HepG2 (cell line): ENCODE measurements at regions of chr9 and their contacts with region 1.

Region 1: GRCh38 chr9:36190388-36191287 is at the start of gene CLTA:
- DNase-seq: peak; percentile 99
- ATAC-seq: peak; percentile 98
- H3K4me3 ChIP-seq: peak within 1 kb of the TSS; percentile 84 to 86 (median 85)
- H3K27ac ChIP-seq: peak within 1 kb of the TSS; percentile 76
- H3K4me1 ChIP-seq: peaks cover 36% of the 10 kb centered on the region
- H3K27me3 ChIP-seq: no peaks in the 10 kb centered on the region; a peak in 1 of 5 replicates
- CTCF ChIP-seq: peak; percentile 51
- EP300 ChIP-seq: 0 out of 4 replicates have a peak, but pooled peaks of 1 of the 2 experiments have one; percentile 8
- POLR2A ChIP-seq: peak; percentile 95 to 98
- RAD21 ChIP-seq: peak; percentile 33; the same call in 1 of the 2 replicates
- total RNA-seq, gene CLTA: 222 and 227 TPM in 2 replicates

Region 2: DNA sequence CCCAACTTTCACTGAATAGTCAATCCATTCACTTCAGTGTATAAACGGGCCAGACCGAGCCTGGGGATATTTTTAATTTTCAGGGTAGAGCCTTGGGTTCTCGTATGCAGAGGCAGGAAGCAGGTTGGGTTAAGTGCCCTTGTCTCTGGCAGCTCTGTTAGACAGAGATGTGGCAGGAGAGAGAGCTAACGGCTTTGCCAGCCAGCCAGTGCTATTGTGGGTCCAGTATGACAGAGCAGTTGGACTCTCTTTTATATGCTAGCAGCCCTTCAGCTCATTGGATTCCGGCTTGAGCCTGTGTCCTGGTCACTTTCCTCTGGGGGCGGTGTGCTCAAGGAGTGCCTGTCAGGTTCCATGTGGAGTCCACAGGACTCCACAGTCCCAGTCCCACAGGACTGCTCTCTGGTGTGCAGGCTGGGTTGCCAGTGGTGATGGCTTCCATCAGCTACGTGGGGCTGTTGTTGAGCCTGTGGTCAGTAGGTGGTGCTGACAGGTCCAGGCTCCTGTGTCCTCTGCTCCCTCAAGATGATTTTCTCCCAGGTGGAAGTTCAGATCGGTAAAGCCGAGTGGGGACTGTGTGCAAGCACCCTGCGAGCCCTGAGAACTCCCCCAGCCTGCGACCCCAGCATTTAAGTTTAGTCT is 14.4 kb after region 1 on chr9:
- CTCF ChIA-PET with region 1: no interaction called
- POLR2A ChIA-PET with region 1: interaction called, 62 read pairs
- in situ Hi-C with region 1: no loop called
- intact Hi-C with region 1: no loop called
- DNase-seq: no peak
- ATAC-seq: peak; percentile 83
- H3K4me3 ChIP-seq: no peak overlapping the region
- H3K27ac ChIP-seq: no peak overlapping the region
- H3K4me1 ChIP-seq: peaks cover 37% of the 10 kb centered on the region
- H3K27me3 ChIP-seq: no peaks in the 10 kb centered on the region
- CTCF ChIP-seq: peak; percentile 70
- EP300 ChIP-seq: no peak
- POLR2A ChIP-seq: no peak
- RAD21 ChIP-seq: no peak

Region 3: GRCh38 chr9:36400332-36401163 is 209.9 kb after region 1 on chr9:
- CTCF ChIA-PET with region 1: no interaction called
- POLR2A ChIA-PET with region 1: no interaction called
- in situ Hi-C with region 1: no loop called
- intact Hi-C with region 1: no loop called
- DNase-seq: peak; percentile 77
- ATAC-seq: peak; percentile 88
- H3K4me3 ChIP-seq: peak overlapping the region; percentile 77 to 100 (median 85)
- H3K27ac ChIP-seq: peak overlapping the region; percentile 84
- H3K4me1 ChIP-seq: peaks cover 28% of the 10 kb centered on the region
- H3K27me3 ChIP-seq: no peaks in the 10 kb centered on the region; a peak in 1 of 5 replicates
- CTCF ChIP-seq: peak; percentile 45
- EP300 ChIP-seq: peak; percentile 8 to 34; a peak in 1 of 4 replicates
- POLR2A ChIP-seq: peak; percentile 56 to 64
- RAD21 ChIP-seq: no peak; the same call in 1 of the 2 replicates